Esophagus squamous epithelium (tissue), 5 donors: ENCODE measurements at regions of chr11 and their contacts with region 1.

Region 1: GRCh38 chr11:18721561-18722292 is 4.3 kb downstream of the IGSF22 start:
- DNase-seq: no peak
- H3K4me3 ChIP-seq: peak overlapping the region; percentile 33 to 70 (median 58)
- H3K27ac ChIP-seq: peak overlapping the region; percentile 39 to 76 (median 68)
- H3K4me1 ChIP-seq: peaks cover 4 to 23% (median 17%) of the 10 kb centered on the region in 3 donors
- H3K27me3 ChIP-seq: no peaks in the 10 kb centered on the region
- CTCF ChIP-seq: peak; percentile 61 to 77 (median 70)
- POLR2A ChIP-seq: no peak

Region 2: DNA sequence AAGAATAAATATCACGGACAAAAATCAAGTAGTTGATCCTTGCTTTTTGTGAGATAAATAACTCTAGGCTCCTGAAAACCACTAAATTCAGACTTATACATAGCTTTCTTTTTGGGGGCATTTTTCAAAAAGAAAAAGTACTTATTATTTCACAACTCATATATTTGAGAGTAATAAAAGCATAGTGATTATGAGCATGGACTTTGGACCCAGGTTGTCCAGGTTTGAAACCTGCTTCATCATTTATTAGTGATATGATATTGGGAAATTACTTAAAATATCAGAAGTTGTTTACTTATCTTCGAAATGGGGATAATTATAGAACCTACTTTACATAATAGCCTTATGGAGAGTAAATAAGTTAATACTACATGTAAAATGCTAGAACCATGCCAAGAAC is 283.0 kb before region 1 on chr11:
- intact Hi-C with region 1: no loop called
- DNase-seq: no peak
- H3K4me3 ChIP-seq: no peak overlapping the region
- H3K27ac ChIP-seq: no peak overlapping the region
- H3K4me1 ChIP-seq: no peaks in the 10 kb centered on the region
- H3K27me3 ChIP-seq: no peaks in the 10 kb centered on the region
- CTCF ChIP-seq: no peak
- POLR2A ChIP-seq: no peak

Region 3: GRCh38 chr11:18540207-18541009 is 181.3 kb before region 1 on chr11:
- intact Hi-C with region 1: loop called (anchors 10 kb)
- DNase-seq: no peak
- H3K4me3 ChIP-seq: no peak overlapping the region
- H3K27ac ChIP-seq: no peak overlapping the region
- H3K4me1 ChIP-seq: no peaks in the 10 kb centered on the region
- H3K27me3 ChIP-seq: no peaks in the 10 kb centered on the region
- CTCF ChIP-seq: peak in 5 of 6 experiments; percentile 22 to 59 (median 47)
- POLR2A ChIP-seq: no peak